HepG2 (cell line): ENCODE measurements at regions of chr20 and their contacts with region 1.

Region 1: GRCh38 chr20:22586645-22587310 is 2.4 kb upstream of the FOXA2 start:
- DNase-seq: peak; percentile 56
- ATAC-seq: peak; percentile 49
- H3K4me3 ChIP-seq: peak overlapping the region; percentile 58 to 80 (median 64)
- H3K27ac ChIP-seq: no peak overlapping the region
- H3K4me1 ChIP-seq: peaks cover 33% of the 10 kb centered on the region
- H3K27me3 ChIP-seq: peaks cover 3 to 36% of the 10 kb centered on the region in 2 experiments
- CTCF ChIP-seq: peak; percentile 96
- EP300 ChIP-seq: peak in 1 of 2 experiments; percentile 50; a peak in 1 of 4 replicates
- POLR2A ChIP-seq: no peak
- RAD21 ChIP-seq: peak; percentile 100

Region 2: DNA sequence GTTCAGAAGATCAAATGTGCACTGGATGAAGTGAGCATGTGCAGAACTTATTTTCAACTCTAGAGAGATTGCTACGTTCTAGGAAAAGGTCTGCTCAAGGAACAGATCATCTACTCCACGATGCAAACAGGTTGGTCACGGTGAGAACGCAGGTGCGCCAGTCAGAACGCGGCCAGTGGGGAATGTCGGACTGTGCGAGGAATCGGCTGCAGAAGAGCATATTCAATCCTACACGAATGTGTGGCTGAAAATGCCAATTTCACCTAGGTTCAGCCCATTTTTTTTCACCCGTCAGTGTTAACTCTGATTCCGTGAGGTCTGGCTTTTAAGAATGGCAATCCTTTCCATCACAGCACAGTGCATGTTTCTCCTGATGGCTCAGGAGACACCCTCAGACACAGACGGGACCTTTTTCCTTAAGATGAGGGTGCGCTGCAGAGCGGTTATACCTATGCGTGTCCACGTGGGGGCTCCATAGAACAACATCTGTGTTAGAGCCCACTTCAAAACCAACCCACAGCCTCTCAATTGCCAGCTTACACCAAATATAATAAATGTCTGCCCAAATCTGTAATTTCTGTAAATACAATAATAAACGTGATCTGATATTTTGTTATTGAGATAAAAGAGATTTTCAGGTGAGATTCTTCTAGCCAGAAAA is 252.8 kb before region 1 on chr20:
- CTCF ChIA-PET with region 1: interaction called, 76 read pairs
- POLR2A ChIA-PET with region 1: interaction called, 7 read pairs
- in situ Hi-C with region 1: loop called (anchors 5 kb)
- intact Hi-C with region 1: loop called (anchors 1 kb)
- DNase-seq: peak; percentile 71
- ATAC-seq: peak; percentile 92
- H3K4me3 ChIP-seq: no peak overlapping the region
- H3K27ac ChIP-seq: no peak overlapping the region
- H3K4me1 ChIP-seq: no peaks in the 10 kb centered on the region
- H3K27me3 ChIP-seq: peaks cover 4 to 20% of the 10 kb centered on the region in 2 experiments; a peak in 3 of 5 replicates
- CTCF ChIP-seq: peak; percentile 90
- EP300 ChIP-seq: no peak
- POLR2A ChIP-seq: no peak
- RAD21 ChIP-seq: peak; percentile 80

Region 3: GRCh38 chr20:22403632-22404361 is 183.0 kb before region 1 on chr20:
- CTCF ChIA-PET with region 1: no interaction called
- POLR2A ChIA-PET with region 1: interaction called, 11 read pairs
- in situ Hi-C with region 1: no loop called
- intact Hi-C with region 1: loop called (anchors 2 kb)
- DNase-seq: peak; percentile 77
- ATAC-seq: peak; percentile 90
- H3K4me3 ChIP-seq: peak overlapping the region; percentile 47 to 69 (median 69)
- H3K27ac ChIP-seq: peak overlapping the region; percentile 17
- H3K4me1 ChIP-seq: peaks cover 47% of the 10 kb centered on the region
- H3K27me3 ChIP-seq: peaks cover 0 to 12% of the 10 kb centered on the region in 2 experiments; a peak in 3 of 5 replicates
- CTCF ChIP-seq: no peak
- EP300 ChIP-seq: 0 out of 4 replicates have a peak, but pooled peaks of 1 of the 2 experiments have one; percentile 33
- POLR2A ChIP-seq: no peak
- RAD21 ChIP-seq: 0 out of 2 replicates have a peak, but pooled peaks have one; percentile 7

Region 4: GRCh38 chr20:22418738-22419137 is 168.0 kb before region 1 on chr20:
- CTCF ChIA-PET with region 1: no interaction called
- POLR2A ChIA-PET with region 1: no interaction called
- in situ Hi-C with region 1: no loop called
- intact Hi-C with region 1: no loop called
- DNase-seq: peak; percentile 43
- ATAC-seq: no peak
- H3K4me3 ChIP-seq: no peak overlapping the region
- H3K27ac ChIP-seq: no peak overlapping the region
- H3K4me1 ChIP-seq: peaks cover 31% of the 10 kb centered on the region
- H3K27me3 ChIP-seq: no peaks in the 10 kb centered on the region
- CTCF ChIP-seq: no peak
- EP300 ChIP-seq: no peak
- POLR2A ChIP-seq: no peak
- RAD21 ChIP-seq: no peak

Region 5: GRCh38 chr20:22453239-22454080 is 133.3 kb before region 1 on chr20:
- CTCF ChIA-PET with region 1: interaction called, 83 read pairs
- POLR2A ChIA-PET with region 1: interaction called, 10 read pairs
- in situ Hi-C with region 1: loop called (anchors 5 kb)
- intact Hi-C with region 1: loop called (anchors 1 kb)
- DNase-seq: peak; percentile 70
- ATAC-seq: peak; percentile 60; the same call in 2 of the 3 replicates
- H3K4me3 ChIP-seq: no peak overlapping the region
- H3K27ac ChIP-seq: no peak overlapping the region
- H3K4me1 ChIP-seq: peaks cover 27% of the 10 kb centered on the region
- H3K27me3 ChIP-seq: peaks cover 6 to 60% of the 10 kb centered on the region in 2 experiments
- CTCF ChIP-seq: peak; percentile 86
- EP300 ChIP-seq: no peak
- POLR2A ChIP-seq: no peak
- RAD21 ChIP-seq: peak; percentile 80

Region 6: GRCh38 chr20:22511943-22512910 is 74.6 kb before region 1 on chr20:
- CTCF ChIA-PET with region 1: interaction called, 3 read pairs
- POLR2A ChIA-PET with region 1: interaction called, 189 read pairs
- in situ Hi-C with region 1: no loop called
- intact Hi-C with region 1: loop called (anchors 1 kb)
- DNase-seq: peak; percentile 99
- ATAC-seq: peak; percentile 93
- H3K4me3 ChIP-seq: peak overlapping the region; percentile 0 to 47 (median 27); a peak in 4 of 6 replicates
- H3K27ac ChIP-seq: peak overlapping the region; percentile 92
- H3K4me1 ChIP-seq: peaks cover 94% of the 10 kb centered on the region
- H3K27me3 ChIP-seq: no peaks in the 10 kb centered on the region
- CTCF ChIP-seq: peak; percentile 46
- EP300 ChIP-seq: peak; percentile 68 to 99; a peak in 3 of 4 replicates
- POLR2A ChIP-seq: peak; percentile 83 to 93
- RAD21 ChIP-seq: peak; percentile 63

Region 7: GRCh38 chr20:22567944-22568871 is 18.6 kb before region 1 on chr20:
- CTCF ChIA-PET with region 1: no interaction called
- POLR2A ChIA-PET with region 1: interaction called, 51 read pairs
- in situ Hi-C with region 1: no loop called
- intact Hi-C with region 1: no loop called
- DNase-seq: no peak
- ATAC-seq: no peak
- H3K4me3 ChIP-seq: no peak overlapping the region
- H3K27ac ChIP-seq: no peak overlapping the region
- H3K4me1 ChIP-seq: peaks cover 58% of the 10 kb centered on the region
- H3K27me3 ChIP-seq: no peaks in the 10 kb centered on the region; a peak in 1 of 5 replicates
- CTCF ChIP-seq: no peak
- EP300 ChIP-seq: no peak
- POLR2A ChIP-seq: no peak
- RAD21 ChIP-seq: no peak

Region 8: DNA sequence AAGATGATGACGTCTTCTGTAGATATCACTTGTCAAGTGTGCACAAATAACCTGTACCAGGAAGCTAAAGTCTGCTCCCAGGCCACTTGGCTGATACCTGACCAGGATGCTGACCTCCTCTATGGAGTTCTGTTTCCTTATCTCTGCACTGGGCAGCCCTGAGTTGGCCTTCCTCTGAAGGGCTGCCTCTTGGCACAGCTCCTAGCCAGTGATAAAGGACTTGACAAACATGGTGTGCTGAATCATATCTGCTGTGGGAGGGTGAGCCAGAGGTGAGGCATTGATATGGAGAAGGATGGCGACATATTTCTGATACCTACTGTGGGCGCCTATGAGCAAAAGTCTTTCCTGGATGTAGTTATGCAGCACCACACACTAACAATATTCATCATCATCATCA is 30.4 kb after region 1 on chr20:
- CTCF ChIA-PET with region 1: no interaction called
- POLR2A ChIA-PET with region 1: no interaction called
- in situ Hi-C with region 1: no loop called
- intact Hi-C with region 1: no loop called
- DNase-seq: peak; percentile 58
- ATAC-seq: peak; percentile 57
- H3K4me3 ChIP-seq: no peak overlapping the region
- H3K27ac ChIP-seq: no peak overlapping the region
- H3K4me1 ChIP-seq: peaks cover 12% of the 10 kb centered on the region
- H3K27me3 ChIP-seq: 0 out of 5 replicates have a peak, but pooled peaks cover 4 to 11% of the 10 kb centered on the region in 2 experiments
- CTCF ChIP-seq: no peak
- EP300 ChIP-seq: no peak
- POLR2A ChIP-seq: no peak
- RAD21 ChIP-seq: no peak

Region 9: DNA sequence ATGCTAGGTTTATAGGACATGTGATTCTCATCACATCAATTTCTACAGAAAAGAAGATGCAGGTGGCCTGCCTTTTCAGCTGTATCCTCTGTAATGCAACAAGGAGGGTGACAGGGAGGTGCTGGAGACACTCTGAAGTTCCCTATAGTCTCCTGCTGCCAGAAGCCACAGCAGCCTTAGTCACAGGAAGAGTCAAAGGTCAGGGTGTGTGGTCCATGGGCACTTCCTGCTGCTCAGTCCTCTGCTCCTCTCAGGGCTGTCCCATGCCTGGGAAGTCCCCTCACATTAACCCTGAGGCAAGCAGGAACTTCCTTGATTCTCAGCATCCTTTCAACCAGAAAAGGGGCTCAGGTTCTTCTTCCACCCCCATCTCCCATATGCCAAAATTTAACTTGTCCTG is 142.4 kb after region 1 on chr20:
- CTCF ChIA-PET with region 1: no interaction called
- POLR2A ChIA-PET with region 1: no interaction called
- in situ Hi-C with region 1: no loop called
- intact Hi-C with region 1: no loop called
- DNase-seq: no peak
- ATAC-seq: peak; percentile 74
- H3K4me3 ChIP-seq: no peak overlapping the region
- H3K27ac ChIP-seq: no peak overlapping the region
- H3K4me1 ChIP-seq: no peaks in the 10 kb centered on the region
- H3K27me3 ChIP-seq: no peaks in the 10 kb centered on the region
- CTCF ChIP-seq: no peak
- EP300 ChIP-seq: no peak
- POLR2A ChIP-seq: no peak
- RAD21 ChIP-seq: no peak

Region 10: GRCh38 chr20:23350196-23350903 is 763.6 kb after region 1 on chr20 and contains the start of gene NXT1:
- CTCF ChIA-PET with region 1: no interaction called
- POLR2A ChIA-PET with region 1: interaction called, 11 read pairs
- in situ Hi-C with region 1: no loop called
- intact Hi-C with region 1: no loop called
- DNase-seq: peak; percentile 100
- ATAC-seq: peak; percentile 92
- H3K4me3 ChIP-seq: peak within 1 kb of the TSS; percentile 80 to 91 (median 90)
- H3K27ac ChIP-seq: peak within 1 kb of the TSS; percentile 91
- H3K4me1 ChIP-seq: peaks cover 45% of the 10 kb centered on the region
- H3K27me3 ChIP-seq: no peaks in the 10 kb centered on the region; a peak in 1 of 5 replicates
- CTCF ChIP-seq: peak; percentile 45
- EP300 ChIP-seq: peak in 1 of 2 experiments; percentile 26; a peak in 1 of 4 replicates
- POLR2A ChIP-seq: peak; percentile 82 to 93
- RAD21 ChIP-seq: peak; percentile 46; the same call in 1 of the 2 replicates
- total RNA-seq, gene NXT1: 65.9 and 69.7 TPM in 2 replicates